ENCODE measurements at regions of chr6 and their contacts with region 1.

Region 1: DNA sequence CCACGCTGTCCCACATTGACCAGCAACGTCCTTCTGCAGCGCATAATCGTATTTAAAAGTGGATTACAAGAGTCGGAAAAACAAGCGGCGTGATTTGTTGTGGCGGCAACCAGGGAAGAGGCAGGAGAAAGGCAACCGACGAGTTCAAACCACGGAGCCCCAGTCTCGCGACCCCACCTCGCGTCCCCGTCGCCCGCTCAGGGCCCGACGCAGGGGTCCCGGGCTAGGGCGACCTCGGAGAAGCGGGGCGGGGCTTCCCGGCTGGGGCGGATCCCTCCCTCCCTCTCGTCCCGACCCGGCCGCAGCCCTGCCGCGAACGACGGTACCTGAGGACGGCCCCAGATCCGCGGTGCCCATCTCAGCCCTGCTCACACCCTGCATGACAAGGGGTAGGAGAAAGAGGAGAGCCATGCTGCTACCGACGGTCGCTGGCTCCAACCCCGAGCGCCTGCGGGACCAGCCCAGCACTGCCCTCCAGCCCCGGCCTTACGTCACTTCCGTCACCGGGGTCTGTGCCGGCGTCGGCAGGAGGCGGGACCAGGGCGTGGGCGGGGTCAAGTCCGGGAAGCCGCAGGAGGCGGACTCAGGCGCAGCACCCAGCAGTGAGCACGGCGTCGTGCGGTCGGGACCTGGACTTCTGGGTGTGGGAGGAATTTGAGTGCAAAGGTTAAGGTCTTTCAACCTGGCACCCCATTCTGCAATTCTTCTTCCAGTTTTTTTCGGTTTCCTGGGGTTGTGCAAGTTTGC is at the start of gene IFNGR1:
- DNase-seq: peak; percentile 93 to 97 (median 97)
- H3K4me3 ChIP-seq: peak within 1 kb of the TSS; percentile 68 to 94 (median 90)
- H3K4me3 Mint-ChIP-seq: peak within 1 kb of the TSS; percentile 94 to 99
- H3K27ac ChIP-seq: peak within 1 kb of the TSS; percentile 99
- H3K27ac Mint-ChIP-seq: peak within 1 kb of the TSS; percentile 99 to 100 (median 100)
- H3K4me1 ChIP-seq: peaks cover 79 to 84% of the 10 kb centered on the region in 2 donors
- H3K4me1 Mint-ChIP-seq: peaks cover 76% of the 10 kb centered on the region
- H3K27me3 ChIP-seq: no peaks in the 10 kb centered on the region
- H3K27me3 Mint-ChIP-seq: peaks cover 0 to 4% (median 0%) of the 10 kb centered on the region in 3 donors
- CTCF ChIP-seq: no peak
- polyA plus RNA-seq, gene IFNGR1: 204 to 372 (median 364) TPM

Region 2: GRCh38 chr6:137165375-137166246 is 53.5 kb before region 1 on chr6:
- intact Hi-C with region 1: no loop called
- DNase-seq: peak in 1 of 3 donors; percentile 22
- H3K4me3 ChIP-seq: peak overlapping the region in 1 of 3 experiments; percentile 36
- H3K4me3 Mint-ChIP-seq: peak overlapping the region in 1 of 2 donors; percentile 69
- H3K27ac ChIP-seq: peak overlapping the region in 1 of 2 donors; percentile 73
- H3K27ac Mint-ChIP-seq: peak overlapping the region; percentile 53 to 86 (median 69)
- H3K4me1 ChIP-seq: peaks cover 41 to 62% of the 10 kb centered on the region in 2 donors
- H3K4me1 Mint-ChIP-seq: peaks cover 62% of the 10 kb centered on the region
- H3K27me3 ChIP-seq: no peaks in the 10 kb centered on the region
- H3K27me3 Mint-ChIP-seq: no peaks in the 10 kb centered on the region
- CTCF ChIP-seq: no peak

Region 3: GRCh38 chr6:137240168-137240567 is 21.1 kb after region 1 on chr6:
- intact Hi-C with region 1: loop called in 1 of 2 experiments (anchors 2 kb)
- DNase-seq: peak; percentile 95 to 99 (median 96)
- H3K4me3 ChIP-seq: peak overlapping the region in 1 of 3 experiments; percentile 50
- H3K4me3 Mint-ChIP-seq: no peak overlapping the region
- H3K27ac ChIP-seq: peak overlapping the region; percentile 78 to 84
- H3K27ac Mint-ChIP-seq: peak overlapping the region; percentile 86 to 97 (median 94)
- H3K4me1 ChIP-seq: peaks cover 57 to 69% of the 10 kb centered on the region in 2 donors
- H3K4me1 Mint-ChIP-seq: peaks cover 55% of the 10 kb centered on the region
- H3K27me3 ChIP-seq: no peaks in the 10 kb centered on the region
- H3K27me3 Mint-ChIP-seq: peaks cover 0 to 2% (median 0%) of the 10 kb centered on the region in 3 donors
- CTCF ChIP-seq: no peak